ENCODE measurements at regions of chr6 and their contacts with region 1.

Region 1: GRCh38 chr6:142692942-142693341 is 252.0 kb downstream of the HIVEP2 start:
- DNase-seq: peak; percentile 42
- H3K4me3 Mint-ChIP-seq: no peak overlapping the region
- H3K27ac Mint-ChIP-seq: no peak overlapping the region
- H3K4me1 Mint-ChIP-seq: peaks cover 22% of the 10 kb centered on the region
- H3K27me3 Mint-ChIP-seq: no peaks in the 10 kb centered on the region

Region 2: GRCh38 chr6:142566628-142567396 is 126.1 kb before region 1 on chr6:
- intact Hi-C with region 1: loop called (anchors 2 kb)
- DNase-seq: peak; percentile 38
- H3K4me3 Mint-ChIP-seq: no peak overlapping the region
- H3K27ac Mint-ChIP-seq: no peak overlapping the region
- H3K4me1 Mint-ChIP-seq: peaks cover 48% of the 10 kb centered on the region
- H3K27me3 Mint-ChIP-seq: no peaks in the 10 kb centered on the region

Region 3: DNA sequence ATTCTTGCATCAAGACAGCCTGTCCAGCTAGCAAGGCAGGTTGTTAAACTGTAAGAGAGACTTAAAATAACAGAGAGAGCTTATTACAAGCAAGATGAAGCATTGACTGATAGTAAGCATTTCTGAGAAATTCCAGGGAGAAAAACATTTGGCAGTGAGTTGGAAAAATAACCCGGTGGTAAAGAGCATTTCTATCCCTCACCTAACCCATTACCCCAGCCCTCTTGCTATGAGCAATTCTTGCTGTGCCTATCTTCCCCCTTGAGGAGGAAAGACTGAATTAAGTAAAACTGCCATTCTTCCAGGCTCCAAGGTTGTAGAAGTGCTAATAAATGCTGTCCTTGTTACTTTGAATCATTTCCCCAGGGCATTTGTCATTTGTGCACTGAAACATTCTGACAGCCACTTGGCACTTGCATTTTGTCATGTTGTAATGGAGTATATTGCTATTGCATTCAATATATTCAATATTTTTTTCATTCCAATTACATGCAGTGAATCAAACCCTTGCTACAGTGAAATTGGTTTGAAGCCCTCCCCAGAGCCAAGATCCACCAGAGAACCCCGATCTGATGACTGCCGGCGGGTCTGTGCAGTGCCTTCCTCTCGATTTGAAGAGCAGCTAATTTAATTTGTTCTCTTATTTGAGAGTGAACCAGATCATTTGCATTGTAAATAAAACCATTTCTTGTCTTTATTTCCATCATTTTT is 39.1 kb before region 1 on chr6:
- intact Hi-C with region 1: no loop called
- DNase-seq: no peak
- H3K4me3 Mint-ChIP-seq: no peak overlapping the region
- H3K27ac Mint-ChIP-seq: no peak overlapping the region
- H3K4me1 Mint-ChIP-seq: no peaks in the 10 kb centered on the region
- H3K27me3 Mint-ChIP-seq: peaks cover 2% of the 10 kb centered on the region

Region 4: DNA sequence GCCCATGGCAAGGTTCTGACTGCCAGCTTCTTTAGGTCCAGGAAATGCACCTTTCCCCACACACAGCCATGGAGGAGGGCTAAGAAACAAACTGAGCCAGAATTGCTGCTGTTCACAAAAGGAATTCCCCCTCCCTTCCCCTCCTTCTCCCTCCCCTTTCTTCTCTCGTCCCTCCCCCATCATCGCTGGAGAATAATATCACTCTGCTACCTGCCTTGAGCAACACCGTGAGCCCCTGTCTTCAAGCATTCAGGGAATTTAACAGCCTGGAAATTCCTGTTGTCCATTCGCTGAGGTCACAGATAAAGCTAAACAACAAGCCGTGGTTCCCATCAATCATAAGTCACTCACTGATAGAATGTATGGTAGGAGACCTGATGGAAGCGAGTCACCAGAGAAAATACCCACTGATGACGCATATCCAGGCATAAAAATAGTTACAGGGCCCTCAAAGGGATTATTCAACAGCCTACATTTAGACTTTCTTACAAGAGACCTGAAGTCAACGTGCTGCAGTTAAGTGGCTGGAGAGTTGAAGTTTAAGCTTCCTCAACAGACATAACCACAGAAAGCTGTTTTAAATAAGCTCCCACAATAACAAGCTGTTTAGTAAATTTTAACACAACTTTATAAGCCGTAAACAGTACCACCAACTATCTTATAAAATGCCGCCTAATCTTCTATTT is 192.4 kb after region 1 on chr6:
- intact Hi-C with region 1: loop called (anchors 1 kb)
- DNase-seq: peak; percentile 45
- H3K4me3 Mint-ChIP-seq: peak overlapping the region; percentile 96
- H3K27ac Mint-ChIP-seq: peak overlapping the region; percentile 99
- H3K4me1 Mint-ChIP-seq: peaks cover 92% of the 10 kb centered on the region
- H3K27me3 Mint-ChIP-seq: no peaks in the 10 kb centered on the region

Region 5: DNA sequence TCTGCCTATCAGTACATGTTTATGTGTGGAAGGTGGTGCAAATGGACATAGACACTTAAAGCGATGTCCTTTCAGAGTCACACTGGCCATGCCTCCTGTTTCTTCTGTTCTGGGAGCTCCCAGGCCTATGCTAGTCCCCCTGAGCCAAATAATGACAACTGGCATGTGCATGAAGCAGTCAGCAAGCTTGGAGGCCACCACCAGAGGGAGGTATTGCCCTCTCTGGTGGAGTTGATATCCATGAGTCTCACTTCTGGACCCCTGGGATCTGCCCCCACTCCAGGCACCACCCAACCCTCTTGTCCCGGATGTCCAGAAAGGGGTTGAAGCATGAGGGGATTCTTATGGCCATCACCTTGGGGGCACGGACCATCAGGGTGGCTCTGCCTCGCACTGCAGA is 539.9 kb after region 1 on chr6:
- intact Hi-C with region 1: loop called (anchors 5 kb)
- DNase-seq: peak; percentile 4
- H3K4me3 Mint-ChIP-seq: no peak overlapping the region
- H3K27ac Mint-ChIP-seq: no peak overlapping the region
- H3K4me1 Mint-ChIP-seq: no peaks in the 10 kb centered on the region
- H3K27me3 Mint-ChIP-seq: no peaks in the 10 kb centered on the region

Region 6: DNA sequence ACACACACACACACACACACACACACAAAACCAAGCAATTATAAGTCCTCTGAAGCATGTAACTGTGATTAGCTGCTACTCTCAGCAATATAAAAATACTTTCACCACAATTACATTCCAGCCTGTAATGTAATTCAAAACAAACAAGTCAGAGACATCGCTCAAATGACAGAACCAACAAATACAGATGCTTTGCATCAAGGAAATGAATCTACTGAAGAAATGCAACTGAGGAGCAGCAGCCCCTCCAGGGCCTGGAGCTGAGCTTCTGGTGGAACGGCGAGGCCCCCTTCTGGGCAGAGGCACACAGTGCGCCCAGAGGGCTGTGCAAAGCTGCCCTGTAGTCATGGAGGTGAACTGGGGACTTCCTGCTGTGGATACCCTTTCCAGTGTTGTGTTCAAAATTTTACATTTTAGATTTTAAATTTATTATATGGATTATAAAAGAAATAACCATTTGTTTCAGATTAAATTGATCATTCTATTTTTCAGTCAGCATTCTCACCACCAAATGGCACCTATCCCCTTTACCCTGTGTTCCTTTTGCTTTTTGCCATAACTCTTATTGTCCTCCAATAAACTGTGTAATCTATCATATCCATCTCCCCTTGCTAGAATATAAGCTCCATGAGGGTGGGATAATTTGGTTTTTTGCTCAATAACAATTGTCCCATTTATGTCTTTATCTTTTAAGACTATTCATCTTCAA is 734.3 kb after region 1 on chr6:
- intact Hi-C with region 1: loop called (anchors 1 kb)
- DNase-seq: peak; percentile 55
- H3K4me3 Mint-ChIP-seq: no peak overlapping the region
- H3K27ac Mint-ChIP-seq: no peak overlapping the region
- H3K4me1 Mint-ChIP-seq: no peaks in the 10 kb centered on the region
- H3K27me3 Mint-ChIP-seq: no peaks in the 10 kb centered on the region

Measured in activated T-helper 1 cell treated with anti-CD3 and anti-CD28 coated beads, Interleukin-12 subunit alpha, Interleukin-12 subunit beta, Interleukin-2, Interleukin-4 antibody, amounts not matched to agents 30 ng/mL and 10 ng/mL and 1 ng/mL, durations not matched to agents 14 hours and 24 hours and 36 hours (primary cell).